Left ventricle myocardium superior (tissue), 1 donor: ENCODE measurements at regions of chr5 and their contacts with region 1.

Region 1: DNA sequence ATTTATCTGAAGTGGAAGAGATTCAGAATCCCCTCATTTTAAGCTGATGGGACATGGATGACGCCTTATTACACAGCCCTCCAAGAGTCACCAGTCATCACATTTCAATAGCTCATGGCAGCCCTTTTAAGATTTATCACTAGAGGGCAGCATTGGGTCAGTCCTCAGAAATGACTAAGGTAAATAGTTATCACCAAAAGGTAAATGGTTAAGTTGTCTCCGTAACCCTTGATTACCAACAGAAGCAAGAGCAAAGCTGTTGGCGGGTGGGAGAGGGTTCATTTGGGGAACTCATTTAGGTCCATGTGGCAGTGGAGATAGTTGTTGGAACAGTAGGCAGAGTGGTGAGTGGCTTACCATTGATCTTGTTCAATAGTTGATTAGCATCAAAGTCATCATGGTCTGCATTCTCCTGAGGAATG is 12.0 kb upstream of the C9 start:
- DNase-seq: no peak
- ATAC-seq: peak; percentile 43

Region 2: DNA sequence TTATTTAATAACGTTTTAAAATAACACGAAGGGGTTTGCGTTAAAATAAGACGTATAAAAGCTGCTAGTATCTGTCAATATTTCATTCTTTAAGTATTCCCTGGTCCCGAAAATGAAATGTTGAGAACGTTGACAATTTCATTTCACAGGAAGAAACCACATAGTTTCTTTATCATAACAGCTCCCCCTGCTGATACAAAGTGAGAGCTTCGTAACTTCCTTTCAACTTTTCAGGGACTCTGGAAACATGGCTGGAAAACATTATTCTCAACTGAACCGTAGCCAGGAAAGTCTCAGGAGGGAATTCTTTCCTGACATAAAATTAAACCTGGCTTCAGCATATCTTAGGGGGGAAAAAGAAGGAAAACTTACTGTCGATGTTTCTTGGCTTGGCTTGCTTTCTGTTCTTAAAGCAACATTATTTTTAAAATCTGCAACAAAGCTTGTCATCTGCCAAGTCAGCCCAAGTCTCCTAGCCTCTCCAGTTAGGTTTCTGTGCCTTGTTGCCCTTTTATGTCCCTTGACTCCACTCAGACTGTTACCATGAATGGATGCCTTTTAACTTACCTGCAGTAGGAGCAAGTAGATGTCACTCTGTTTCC is 171.3 kb after region 1 on chr5:
- intact Hi-C with region 1: loop called (anchors 2 kb)
- DNase-seq: no peak
- ATAC-seq: peak; percentile 85